AG04450 (cell line): ENCODE measurements at regions of chr2 and their contacts with region 1.

Region 1: DNA sequence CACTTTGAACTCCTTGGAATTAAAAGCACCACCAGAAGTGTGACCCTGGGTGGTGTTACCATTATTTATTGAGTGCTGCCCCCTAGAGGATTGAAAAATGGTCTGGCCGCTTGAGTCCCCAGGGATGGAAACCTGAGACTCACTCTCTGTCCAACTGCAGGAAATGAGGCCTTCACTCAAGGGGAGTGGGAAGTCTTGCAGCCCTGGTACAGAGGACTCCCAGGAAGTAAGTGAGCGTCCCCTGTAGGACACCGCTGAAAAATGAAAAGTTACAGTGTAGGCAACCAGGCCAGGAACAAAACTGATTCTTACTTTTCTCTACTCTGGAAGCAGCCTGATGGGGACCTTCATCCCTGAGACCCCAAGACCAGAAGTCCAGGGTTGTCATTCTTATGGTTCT is 2.2 kb upstream of the NRP2 start:
- DNase-seq: peak; percentile 78
- H3K4me3 ChIP-seq: no peak overlapping the region
- H3K27ac ChIP-seq: no peak overlapping the region
- H3K27me3 ChIP-seq: no peaks in the 10 kb centered on the region
- CTCF ChIP-seq: peak; percentile 71

Region 2: DNA sequence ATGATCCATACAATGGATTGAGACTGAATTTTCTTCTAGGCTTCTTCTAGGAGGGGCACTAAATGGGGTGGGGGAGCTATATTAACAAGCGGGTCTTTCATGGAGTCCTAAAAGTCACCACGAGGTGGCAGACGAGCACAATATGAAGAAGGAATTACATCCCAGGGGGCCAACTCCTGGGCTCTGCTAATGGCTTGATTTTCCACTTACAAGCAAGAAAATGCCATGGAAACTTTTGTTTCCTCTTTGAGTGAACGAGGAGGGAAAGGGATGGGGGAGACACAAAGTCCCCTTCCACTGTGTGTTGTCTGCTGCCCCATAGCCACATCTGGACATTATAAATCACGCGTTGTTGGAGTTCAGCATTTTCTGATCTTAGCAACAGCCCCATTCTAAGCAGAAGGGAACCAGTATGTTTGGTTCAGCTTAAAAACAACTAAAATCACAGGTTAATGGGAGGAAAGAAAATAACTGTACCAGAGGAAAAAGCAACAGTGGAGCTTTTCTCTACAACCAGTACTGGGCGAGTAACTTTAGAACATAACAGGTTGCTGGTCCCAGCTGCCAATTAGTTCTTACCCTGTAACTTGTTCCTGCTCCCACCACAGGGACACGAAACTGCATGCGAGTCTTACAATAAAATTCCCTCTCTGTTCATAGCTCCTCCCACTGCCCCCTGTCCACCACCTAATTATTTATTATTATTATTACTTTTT is 1419.7 kb before region 1 on chr2:
- CTCF ChIA-PET with region 1: interaction called, 52 read pairs
- POLR2A ChIA-PET with region 1: no interaction called
- DNase-seq: peak; percentile 49
- H3K4me3 ChIP-seq: no peak overlapping the region
- H3K27ac ChIP-seq: no peak overlapping the region
- H3K27me3 ChIP-seq: peaks cover 2% of the 10 kb centered on the region
- CTCF ChIP-seq: peak; percentile 86

Region 3: DNA sequence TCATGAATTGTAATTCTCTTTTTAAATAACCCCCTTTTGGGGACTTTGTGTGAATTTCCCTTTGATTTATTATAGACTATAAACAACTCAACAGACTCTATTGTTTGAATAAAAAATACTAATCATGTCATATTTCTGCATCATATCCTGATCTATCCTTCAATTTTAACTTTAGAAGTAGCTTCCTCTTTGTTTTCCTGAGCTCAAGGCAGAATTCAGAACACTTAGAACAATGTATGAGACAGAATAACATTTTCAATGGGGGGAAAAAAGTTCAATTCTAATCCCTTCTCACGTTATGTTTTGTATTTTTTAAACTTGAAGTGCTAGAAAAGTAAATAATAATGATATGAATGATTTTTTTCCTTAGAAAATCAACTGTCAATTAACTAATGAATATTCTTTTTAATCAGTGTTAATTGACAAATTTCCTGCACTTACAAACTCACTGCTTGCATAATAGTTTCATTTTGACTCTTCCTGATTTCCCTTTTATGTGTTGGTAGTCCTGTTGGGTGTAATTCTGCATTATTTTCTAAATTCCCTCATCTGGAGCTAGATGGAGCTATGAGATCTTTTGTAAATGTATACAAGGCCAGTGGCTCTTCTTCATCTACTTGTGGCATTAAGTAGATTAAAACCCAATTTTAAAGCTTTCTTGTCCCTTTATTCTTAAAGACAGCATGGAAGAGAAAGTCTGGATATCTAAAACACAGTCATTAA is 808.7 kb before region 1 on chr2:
- CTCF ChIA-PET with region 1: interaction called, 52 read pairs
- POLR2A ChIA-PET with region 1: no interaction called
- DNase-seq: peak; percentile 18
- H3K4me3 ChIP-seq: no peak overlapping the region
- H3K27ac ChIP-seq: no peak overlapping the region
- H3K27me3 ChIP-seq: no peaks in the 10 kb centered on the region
- CTCF ChIP-seq: peak; percentile 55

Region 4: DNA sequence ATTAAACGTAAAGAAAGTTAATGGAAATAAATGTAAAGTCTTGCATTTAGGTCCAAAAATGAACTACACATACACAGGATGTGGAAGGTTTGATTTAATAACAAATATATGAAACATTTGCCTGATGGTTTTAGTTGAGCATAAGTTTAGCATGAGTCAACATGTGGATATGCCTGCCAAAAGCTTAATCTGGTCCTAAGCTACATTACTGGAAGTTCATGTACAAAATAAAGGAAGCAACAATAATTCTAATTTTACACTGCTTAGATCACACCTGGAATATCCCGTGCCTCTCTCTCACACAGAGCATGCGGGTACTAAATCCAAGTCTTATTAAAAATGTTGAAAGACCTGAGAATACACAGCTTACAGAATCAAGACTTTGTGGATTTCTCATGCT is 274.3 kb before region 1 on chr2:
- CTCF ChIA-PET with region 1: interaction called, 11 read pairs
- POLR2A ChIA-PET with region 1: no interaction called
- DNase-seq: peak; percentile 72
- H3K4me3 ChIP-seq: no peak overlapping the region
- H3K27ac ChIP-seq: peak overlapping the region; percentile 4
- H3K27me3 ChIP-seq: no peaks in the 10 kb centered on the region
- CTCF ChIP-seq: no peak

Region 5: DNA sequence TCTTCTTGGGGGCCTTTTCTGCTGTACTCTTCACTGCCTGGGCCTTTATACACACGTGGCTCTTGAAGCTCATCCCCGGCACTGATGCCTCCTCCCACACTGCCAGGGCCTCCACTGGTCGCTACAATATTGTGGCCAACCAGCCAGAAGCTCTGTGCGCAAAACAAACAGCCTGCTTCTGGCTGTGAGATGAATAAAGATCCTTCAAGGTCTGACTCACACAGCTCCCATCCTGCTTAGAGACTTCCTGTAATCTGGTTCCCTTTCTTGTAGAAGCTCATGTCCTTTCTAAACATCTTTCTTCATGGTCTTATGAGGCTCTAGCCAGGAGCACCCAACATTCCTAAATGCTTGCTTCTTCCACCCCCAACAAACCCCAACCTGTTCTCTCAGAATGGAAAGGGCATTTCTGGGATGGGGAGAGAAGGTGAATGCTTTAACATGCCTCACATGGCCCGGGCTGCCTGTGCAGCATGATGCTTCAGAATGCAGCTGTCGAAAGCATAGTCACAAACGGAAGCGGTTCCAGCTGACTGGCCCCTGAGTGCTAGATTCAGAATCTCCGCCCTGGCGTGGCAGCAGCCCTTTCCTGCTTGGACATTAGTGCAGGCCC is 26.8 kb after region 1 on chr2:
- CTCF ChIA-PET with region 1: no interaction called
- POLR2A ChIA-PET with region 1: interaction called, 14 read pairs
- DNase-seq: peak; percentile 80
- H3K4me3 ChIP-seq: peak overlapping the region; percentile 7; the same call in 1 of the 2 replicates
- H3K27ac ChIP-seq: peak overlapping the region; percentile 89
- H3K27me3 ChIP-seq: no peaks in the 10 kb centered on the region
- CTCF ChIP-seq: no peak